ENCODE measurements at regions of chr1 and their contacts with region 1.

Region 1: DNA sequence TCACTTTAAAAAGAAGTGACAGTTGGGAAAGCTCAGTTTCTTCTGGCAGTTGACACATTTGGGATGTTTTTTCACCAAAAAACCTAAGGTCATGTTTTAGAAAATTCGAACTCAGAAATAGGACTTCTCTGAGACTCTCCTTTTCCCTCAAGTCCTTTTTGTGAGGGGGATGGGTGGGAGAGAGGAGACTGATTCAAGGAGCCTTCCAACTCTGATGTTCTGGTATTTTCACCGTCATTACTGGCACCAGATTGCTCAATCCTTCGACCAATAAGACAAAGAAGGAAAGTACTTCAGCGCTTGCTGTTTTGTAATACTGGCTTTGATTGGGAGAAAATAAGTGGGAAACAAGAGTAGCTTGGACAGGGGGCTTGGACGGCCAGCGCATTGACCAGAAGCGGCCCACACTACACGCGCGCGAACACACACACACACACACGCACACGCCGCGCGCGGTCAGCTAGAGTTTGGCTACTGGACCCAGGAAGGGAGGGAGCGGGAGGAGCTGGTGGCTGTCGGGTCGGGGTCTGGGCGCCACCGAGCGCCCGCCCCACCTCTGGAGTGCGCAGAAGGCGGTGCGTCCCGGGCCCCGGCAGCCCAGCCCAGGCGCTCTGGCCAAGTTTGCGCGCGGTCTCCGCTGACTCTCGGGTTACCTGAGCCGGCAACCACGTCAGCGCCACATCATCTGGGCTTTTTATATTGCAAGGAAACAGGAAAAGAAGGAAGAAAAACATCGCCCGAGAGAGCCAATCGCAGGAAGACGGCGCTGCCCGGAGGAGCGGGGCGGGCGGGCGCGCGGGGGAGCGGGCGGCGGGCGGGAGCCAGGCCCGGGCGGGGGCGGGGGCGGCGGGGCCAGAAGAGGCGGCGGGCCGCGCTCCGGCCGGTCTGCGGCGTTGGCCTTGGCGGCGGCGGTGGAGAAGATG is at the start of gene KCNK1:
- DNase-seq: peak; percentile 50
- H3K4me3 Mint-ChIP-seq: peak within 1 kb of the TSS; percentile 78
- H3K27ac Mint-ChIP-seq: peak within 1 kb of the TSS; percentile 66
- H3K4me1 Mint-ChIP-seq: peaks cover 29% of the 10 kb centered on the region
- H3K27me3 Mint-ChIP-seq: peaks cover 64% of the 10 kb centered on the region
- total RNA-seq, gene KCNK1: 5.0 to 5.2 TPM

Region 2: DNA sequence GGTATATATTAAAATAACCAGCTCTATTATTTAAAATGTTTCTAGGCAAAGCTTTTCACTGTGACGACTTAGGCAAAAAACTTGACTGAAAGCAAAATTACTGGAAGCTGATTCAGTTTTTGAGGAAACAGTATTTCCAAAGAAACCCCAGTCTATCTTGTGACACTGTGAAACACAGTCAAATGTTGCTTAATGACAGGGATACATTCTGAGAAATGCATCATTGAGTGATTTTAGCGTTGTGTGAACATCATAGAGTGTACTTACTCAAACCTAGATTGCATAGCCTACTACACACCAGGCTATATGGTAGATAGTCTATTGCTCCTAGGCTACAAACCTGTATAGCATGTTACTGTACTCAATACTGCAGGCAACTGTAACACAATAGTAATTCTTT is 116.5 kb before region 1 on chr1:
- CTCF ChIA-PET with region 1: no interaction called
- POLR2A ChIA-PET with region 1: no interaction called
- intact Hi-C with region 1: loop called (anchors 5 kb)
- DNase-seq: no peak
- H3K4me3 Mint-ChIP-seq: no peak overlapping the region
- H3K27ac Mint-ChIP-seq: no peak overlapping the region
- H3K4me1 Mint-ChIP-seq: no peaks in the 10 kb centered on the region
- H3K27me3 Mint-ChIP-seq: peaks cover 16% of the 10 kb centered on the region

Region 3: GRCh38 chr1:233668725-233669294 is 55.3 kb after region 1 on chr1:
- CTCF ChIA-PET with region 1: no interaction called
- POLR2A ChIA-PET with region 1: no interaction called
- intact Hi-C with region 1: loop called (anchors 5 kb)
- DNase-seq: peak; percentile 29
- H3K4me3 Mint-ChIP-seq: no peak overlapping the region
- H3K27ac Mint-ChIP-seq: no peak overlapping the region
- H3K4me1 Mint-ChIP-seq: peaks cover 5% of the 10 kb centered on the region
- H3K27me3 Mint-ChIP-seq: peaks cover 16% of the 10 kb centered on the region

Region 4: DNA sequence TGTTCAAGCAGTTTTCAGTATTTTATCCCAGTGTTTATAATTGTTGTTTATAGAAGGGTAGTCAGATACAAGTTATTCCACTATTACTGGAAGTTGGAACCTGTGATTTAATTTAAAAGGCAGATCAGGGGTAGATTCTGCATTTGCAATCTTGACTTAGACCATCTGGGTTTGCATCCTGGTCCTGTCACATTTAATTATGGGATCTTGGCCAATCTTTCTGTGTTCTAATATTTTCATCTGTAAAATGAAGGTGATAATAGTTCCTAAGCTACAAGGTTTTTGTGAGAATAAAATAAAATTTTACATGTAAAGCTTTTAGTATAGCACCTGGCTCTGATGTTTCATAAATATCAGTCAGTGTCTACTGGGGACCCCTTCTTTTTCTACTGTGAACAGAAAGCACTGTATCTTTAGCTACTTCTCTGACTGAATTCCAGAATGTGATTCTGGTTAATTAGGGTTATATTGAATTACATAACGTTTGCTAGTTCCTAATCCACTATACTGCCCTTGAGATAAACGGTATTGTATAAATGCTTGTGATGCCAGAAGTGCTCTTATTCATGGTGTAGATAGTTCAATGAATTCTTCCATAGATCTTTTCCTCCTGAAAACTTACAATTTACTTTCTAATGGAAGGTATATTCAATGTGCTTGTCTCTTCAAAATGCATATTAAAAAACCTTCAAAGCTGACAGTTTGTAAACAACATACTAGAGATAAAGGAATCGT is 131.4 kb after region 1 on chr1:
- CTCF ChIA-PET with region 1: no interaction called
- POLR2A ChIA-PET with region 1: no interaction called
- intact Hi-C with region 1: no loop called
- DNase-seq: no peak
- H3K4me3 Mint-ChIP-seq: no peak overlapping the region
- H3K27ac Mint-ChIP-seq: no peak overlapping the region
- H3K4me1 Mint-ChIP-seq: no peaks in the 10 kb centered on the region
- H3K27me3 Mint-ChIP-seq: peaks cover 10% of the 10 kb centered on the region

Measured in activated CD4-positive, alpha-beta memory T cell treated with anti-CD3 and anti-CD28 coated beads for 36 hours (primary cell).